HepG2 (cell line): ENCODE measurements at regions of chr7 and their contacts with region 1.

Region 1: GRCh38 chr7:113404245-113404644 is 285.9 kb upstream of the SMIM30 start:
- DNase-seq: peak; percentile 6
- ATAC-seq: peak; percentile 81
- H3K4me3 ChIP-seq: no peak overlapping the region
- H3K27ac ChIP-seq: no peak overlapping the region
- H3K4me1 ChIP-seq: no peaks in the 10 kb centered on the region
- H3K27me3 ChIP-seq: no peaks in the 10 kb centered on the region
- CTCF ChIP-seq: peak; percentile 47
- EP300 ChIP-seq: no peak
- POLR2A ChIP-seq: no peak
- RAD21 ChIP-seq: no peak

Region 2: DNA sequence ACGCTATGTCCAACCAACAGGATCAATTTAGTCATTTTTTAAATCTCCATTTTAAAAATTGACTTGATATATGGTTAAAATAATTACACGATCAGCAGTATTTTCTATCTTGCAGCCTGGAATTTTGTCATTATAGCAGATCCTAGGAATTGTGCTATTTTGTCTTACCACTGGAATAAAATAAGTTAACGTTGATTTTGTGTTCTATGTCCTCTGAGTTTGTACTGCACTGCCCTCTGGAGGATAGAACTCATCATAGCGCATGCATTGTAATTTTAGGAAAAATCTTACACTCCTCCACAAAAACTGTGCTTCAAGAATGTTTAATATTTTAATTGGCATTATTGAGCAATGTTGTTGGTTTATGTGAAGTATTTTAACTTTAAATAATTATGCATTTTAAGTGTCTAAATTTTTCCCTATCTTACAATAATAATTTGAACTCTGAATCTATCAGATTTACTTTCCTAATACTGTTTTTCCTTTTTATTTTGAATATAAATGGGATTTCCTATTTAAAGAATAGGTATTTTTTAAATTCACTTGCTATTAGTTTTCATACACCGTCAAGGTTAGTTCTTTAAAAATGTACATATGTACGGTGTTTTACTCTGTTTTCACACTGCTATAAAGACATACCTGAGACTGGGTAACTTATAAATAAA is 294.4 kb after region 1 on chr7:
- CTCF ChIA-PET with region 1: interaction called, 3 read pairs
- POLR2A ChIA-PET with region 1: no interaction called
- in situ Hi-C with region 1: loop called (anchors 10 kb)
- intact Hi-C with region 1: no loop called
- DNase-seq: peak; percentile 15
- ATAC-seq: peak; percentile 45; the same call in 2 of the 3 replicates
- H3K4me3 ChIP-seq: no peak overlapping the region
- H3K27ac ChIP-seq: no peak overlapping the region
- H3K4me1 ChIP-seq: no peaks in the 10 kb centered on the region
- H3K27me3 ChIP-seq: no peaks in the 10 kb centered on the region
- CTCF ChIP-seq: peak; percentile 63
- EP300 ChIP-seq: no peak
- POLR2A ChIP-seq: no peak
- RAD21 ChIP-seq: no peak

Region 3: GRCh38 chr7:113936535-113936934 is 532.3 kb after region 1 on chr7:
- CTCF ChIA-PET with region 1: no interaction called
- POLR2A ChIA-PET with region 1: no interaction called
- in situ Hi-C with region 1: no loop called
- intact Hi-C with region 1: no loop called
- DNase-seq: no peak
- ATAC-seq: no peak
- H3K4me3 ChIP-seq: no peak overlapping the region
- H3K27ac ChIP-seq: no peak overlapping the region
- H3K4me1 ChIP-seq: no peaks in the 10 kb centered on the region
- H3K27me3 ChIP-seq: no peaks in the 10 kb centered on the region
- CTCF ChIP-seq: no peak
- EP300 ChIP-seq: no peak
- POLR2A ChIP-seq: no peak
- RAD21 ChIP-seq: no peak